ENCODE measurements at regions of chr13 and their contacts with region 1.

Region 1: GRCh38 chr13:95588721-95589120 is 36.2 kb downstream of the CLDN10 start:
- DNase-seq: no peak
- ATAC-seq: no peak
- H3K4me3 ChIP-seq: no peak overlapping the region
- H3K4me3 Mint-ChIP-seq: no peak overlapping the region
- H3K27ac ChIP-seq: no peak overlapping the region
- H3K27ac Mint-ChIP-seq: no peak overlapping the region
- H3K4me1 ChIP-seq: no peaks in the 10 kb centered on the region
- H3K4me1 Mint-ChIP-seq: no peaks in the 10 kb centered on the region
- H3K27me3 ChIP-seq: no peaks in the 10 kb centered on the region
- H3K27me3 Mint-ChIP-seq: peaks cover 24% of the 10 kb centered on the region
- CTCF ChIP-seq: no peak

Region 2: GRCh38 chr13:96238861-96239626 is 650.3 kb after region 1 on chr13:
- CTCF ChIA-PET with region 1: no interaction called
- POLR2A ChIA-PET with region 1: no interaction called
- intact Hi-C with region 1: loop called in 1 of 2 experiments (anchors 10 kb)
- DNase-seq: no peak
- ATAC-seq: no peak
- H3K4me3 ChIP-seq: no peak overlapping the region
- H3K4me3 Mint-ChIP-seq: no peak overlapping the region
- H3K27ac ChIP-seq: no peak overlapping the region
- H3K27ac Mint-ChIP-seq: no peak overlapping the region
- H3K4me1 ChIP-seq: no peaks in the 10 kb centered on the region
- H3K4me1 Mint-ChIP-seq: no peaks in the 10 kb centered on the region
- H3K27me3 ChIP-seq: no peaks in the 10 kb centered on the region
- H3K27me3 Mint-ChIP-seq: no peaks in the 10 kb centered on the region
- CTCF ChIP-seq: no peak